Endothelial cell of umbilical vein (primary cell): ENCODE measurements at regions of chr3 and their contacts with region 1.

Region 1: GRCh38 chr3:47781685-47782445 is at the start of gene SMARCC1:
- DNase-seq: peak; percentile 98
- H3K4me3 ChIP-seq: peak within 1 kb of the TSS; percentile 69 to 95 (median 82)
- H3K27ac ChIP-seq: peak within 1 kb of the TSS; percentile 89
- H3K4me1 ChIP-seq: peaks cover 12% of the 10 kb centered on the region
- H3K27me3 ChIP-seq: no peaks in the 10 kb centered on the region
- CTCF ChIP-seq: no peak
- POLR2A ChIP-seq: peak; percentile 97
- total RNA-seq, gene SMARCC1: 123 and 138 TPM in 2 replicates

Region 2: DNA sequence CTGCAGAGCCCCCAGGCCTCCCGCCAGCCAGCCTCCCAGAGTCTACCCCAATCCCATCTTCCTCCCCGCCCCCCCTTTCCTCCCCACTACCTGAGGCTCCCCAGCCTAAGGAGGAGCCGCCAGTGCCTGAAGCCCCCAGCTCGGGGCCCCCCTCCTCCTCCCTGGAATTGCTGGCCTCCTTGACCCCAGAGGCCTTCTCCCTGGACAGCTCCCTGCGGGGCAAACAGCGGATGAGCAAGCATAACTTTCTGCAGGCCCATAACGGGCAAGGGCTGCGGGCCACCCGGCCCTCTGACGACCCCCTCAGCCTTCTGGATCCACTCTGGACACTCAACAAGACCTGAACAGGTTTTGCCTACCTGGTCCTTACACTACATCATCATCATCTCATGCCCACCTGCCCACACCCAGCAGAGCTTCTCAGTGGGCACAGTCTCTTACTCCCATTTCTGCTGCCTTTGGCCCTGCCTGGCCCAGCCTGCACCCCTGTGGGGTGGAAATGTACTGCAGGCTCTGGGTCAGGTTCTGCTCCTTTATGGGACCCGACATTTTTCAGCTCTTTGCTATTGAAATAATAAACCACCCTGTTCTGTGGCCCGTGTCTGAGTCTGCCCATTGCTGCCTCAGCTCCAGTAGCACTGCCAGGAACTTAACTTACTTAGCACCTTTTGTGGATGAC is 368.9 kb before region 1 on chr3:
- CTCF ChIA-PET with region 1: no interaction called
- POLR2A ChIA-PET with region 1: interaction called, 10 read pairs
- dilution Hi-C with region 1: no loop called
- intact Hi-C with region 1: no loop called
- DNase-seq: no peak
- H3K4me3 ChIP-seq: no peak overlapping the region
- H3K27ac ChIP-seq: no peak overlapping the region
- H3K4me1 ChIP-seq: no peaks in the 10 kb centered on the region
- H3K27me3 ChIP-seq: no peaks in the 10 kb centered on the region
- CTCF ChIP-seq: peak in 1 of 2 donors; percentile 7
- POLR2A ChIP-seq: no peak

Region 3: GRCh38 chr3:47513125-47513929 is 268.5 kb before region 1 on chr3 and contains the start of gene ELP6:
- CTCF ChIA-PET with region 1: no interaction called
- POLR2A ChIA-PET with region 1: no interaction called
- dilution Hi-C with region 1: no loop called
- intact Hi-C with region 1: loop called (anchors 1 kb)
- DNase-seq: peak; percentile 97
- H3K4me3 ChIP-seq: peak within 1 kb of the TSS; percentile 43 to 79 (median 64)
- H3K27ac ChIP-seq: peak within 1 kb of the TSS; percentile 71
- H3K4me1 ChIP-seq: peaks cover 12% of the 10 kb centered on the region
- H3K27me3 ChIP-seq: no peaks in the 10 kb centered on the region
- CTCF ChIP-seq: peak; percentile 52 to 78
- POLR2A ChIP-seq: peak; percentile 93
- total RNA-seq, gene ELP6: 48.1 and 48.4 TPM in 2 replicates

Region 4: GRCh38 chr3:47705391-47705790 is 76.5 kb before region 1 on chr3:
- CTCF ChIA-PET with region 1: no interaction called
- POLR2A ChIA-PET with region 1: no interaction called
- dilution Hi-C with region 1: no loop called
- intact Hi-C with region 1: loop called (anchors 5 kb)
- DNase-seq: no peak
- H3K4me3 ChIP-seq: no peak overlapping the region
- H3K27ac ChIP-seq: no peak overlapping the region
- H3K4me1 ChIP-seq: no peaks in the 10 kb centered on the region
- H3K27me3 ChIP-seq: no peaks in the 10 kb centered on the region
- CTCF ChIP-seq: no peak
- POLR2A ChIP-seq: no peak

Region 5: DNA sequence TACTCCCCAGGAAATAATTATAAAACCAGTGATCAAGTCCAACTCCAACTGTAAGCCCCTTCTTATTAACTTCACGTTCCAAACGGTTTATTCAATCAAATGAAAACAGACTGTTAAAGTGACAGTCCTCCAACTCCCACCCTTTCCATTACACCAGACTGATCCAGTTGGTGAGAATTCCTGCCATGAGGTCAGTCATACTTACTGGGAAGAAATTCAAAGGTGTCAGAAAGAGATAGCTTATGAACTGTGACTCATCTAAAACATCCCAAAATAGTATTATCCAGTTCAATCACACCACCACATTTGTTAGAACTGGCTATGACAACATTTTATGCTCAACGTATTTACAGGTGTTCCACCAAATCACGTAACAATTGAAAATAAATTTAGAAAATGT is 19.6 kb before region 1 on chr3:
- CTCF ChIA-PET with region 1: no interaction called
- POLR2A ChIA-PET with region 1: no interaction called
- dilution Hi-C with region 1: no loop called
- intact Hi-C with region 1: no loop called
- DNase-seq: no peak
- H3K4me3 ChIP-seq: no peak overlapping the region
- H3K27ac ChIP-seq: no peak overlapping the region
- H3K4me1 ChIP-seq: no peaks in the 10 kb centered on the region
- H3K27me3 ChIP-seq: no peaks in the 10 kb centered on the region
- CTCF ChIP-seq: no peak
- POLR2A ChIP-seq: no peak

Region 6: DNA sequence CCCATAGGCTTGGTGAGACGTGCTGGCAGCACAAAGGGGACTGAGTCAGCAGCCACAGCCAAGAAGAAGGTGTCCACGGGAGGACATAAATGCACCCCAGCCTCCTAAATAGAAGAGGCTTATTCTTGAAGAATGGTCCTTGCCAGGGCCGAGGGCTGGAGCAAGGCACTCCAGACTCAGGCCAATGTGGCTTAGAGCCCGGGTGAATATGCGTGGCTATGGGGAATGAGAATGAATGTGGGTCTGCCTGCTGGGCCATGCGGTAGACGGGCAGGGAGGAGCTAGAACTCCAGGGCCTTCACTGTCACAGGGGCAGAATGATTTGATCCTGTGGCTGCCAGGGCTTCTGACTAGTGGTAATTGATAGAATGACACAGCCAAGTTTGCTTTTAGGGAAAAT is 55.1 kb after region 1 on chr3:
- CTCF ChIA-PET with region 1: no interaction called
- POLR2A ChIA-PET with region 1: no interaction called
- dilution Hi-C with region 1: no loop called
- intact Hi-C with region 1: no loop called
- DNase-seq: no peak
- H3K4me3 ChIP-seq: no peak overlapping the region
- H3K27ac ChIP-seq: no peak overlapping the region
- H3K4me1 ChIP-seq: no peaks in the 10 kb centered on the region
- H3K27me3 ChIP-seq: no peaks in the 10 kb centered on the region
- CTCF ChIP-seq: no peak
- POLR2A ChIP-seq: no peak